Motor neuron (in vitro differentiated cells): ENCODE measurements at regions of chr5 and their contacts with region 1.

Region 1: GRCh38 chr5:157172403-157172802 is 6.3 kb upstream of the GARIN3 start:
- ATAC-seq: no peak
- H3K4me3 ChIP-seq: no peak overlapping the region
- H3K27ac ChIP-seq: no peak overlapping the region
- H3K4me1 ChIP-seq: no peaks in the 10 kb centered on the region

Region 2: GRCh38 chr5:157290981-157291711 is 118.7 kb after region 1 on chr5:
- in situ Hi-C with region 1: loop called in 1 of 9 experiments (anchors 25 kb)
- ATAC-seq: peak in 3 of 8 experiments; percentile 25 to 74 (median 54)
- H3K4me3 ChIP-seq: no peak overlapping the region
- H3K27ac ChIP-seq: no peak overlapping the region
- H3K4me1 ChIP-seq: no peaks in the 10 kb centered on the region